IMR-90 (cell line): ENCODE measurements at regions of chr5 and their contacts with region 1.

Region 1: DNA sequence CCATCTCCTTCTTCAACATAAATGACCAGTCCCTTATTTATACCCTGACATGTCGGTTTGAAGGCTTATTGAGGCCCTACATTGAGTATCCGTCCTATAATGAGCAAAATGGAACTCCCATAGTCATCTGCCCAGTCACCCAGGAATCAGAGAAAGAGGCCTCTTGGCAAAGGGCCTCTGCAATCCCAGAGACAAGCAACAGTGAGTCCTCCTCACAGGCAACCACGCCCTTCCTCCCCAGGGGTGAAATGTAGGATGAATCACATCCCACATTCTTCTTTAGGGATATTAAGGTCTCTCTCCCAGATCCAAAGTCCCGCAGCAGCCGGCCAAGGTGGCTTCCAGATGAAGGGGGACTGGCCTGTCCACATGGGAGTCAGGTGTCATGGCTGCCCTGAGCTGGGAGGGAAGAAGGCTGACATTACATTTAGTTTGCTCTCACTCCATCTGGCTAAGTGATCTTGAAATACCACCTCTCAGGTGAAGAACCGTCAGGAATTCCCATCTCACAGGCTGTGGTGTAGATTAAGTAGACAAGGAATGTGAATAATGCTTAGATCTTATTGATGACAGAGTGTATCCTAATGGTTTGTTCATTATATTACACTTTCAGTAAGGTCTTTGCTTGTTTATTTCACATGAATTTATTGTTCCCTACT is 38.2 kb upstream of the BTNL3 start:
- DNase-seq: no peak
- ATAC-seq: no peak
- H3K4me3 ChIP-seq: no peak overlapping the region
- H3K27ac ChIP-seq: no peak overlapping the region
- H3K4me1 ChIP-seq: no peaks in the 10 kb centered on the region
- H3K27me3 ChIP-seq: no peaks in the 10 kb centered on the region
- CTCF ChIP-seq: no peak
- POLR2A ChIP-seq: no peak
- RAD21 ChIP-seq: no peak

Region 2: DNA sequence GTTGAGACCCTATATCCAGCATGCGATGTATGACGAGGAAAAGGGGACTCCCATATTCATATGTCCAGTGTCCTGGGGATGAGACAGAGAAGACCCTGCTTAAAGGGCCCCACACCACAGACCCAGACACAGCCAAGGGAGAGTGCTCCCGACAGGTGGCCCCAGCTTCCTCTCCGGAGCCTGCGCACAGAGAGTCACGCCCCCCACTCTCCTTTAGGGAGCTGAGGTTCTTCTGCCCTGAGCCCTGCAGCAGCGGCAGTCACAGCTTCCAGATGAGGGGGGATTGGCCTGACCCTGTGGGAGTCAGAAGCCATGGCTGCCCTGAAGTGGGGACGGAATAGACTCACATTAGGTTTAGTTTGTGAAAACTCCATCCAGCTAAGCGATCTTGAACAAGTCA is 55.4 kb after region 1 on chr5:
- CTCF ChIA-PET with region 1: no interaction called
- POLR2A ChIA-PET with region 1: no interaction called
- dilution Hi-C with region 1: no loop called
- in situ Hi-C with region 1: no loop called
- intact Hi-C with region 1: loop called (anchors 1 kb)
- DNase-seq: no peak
- ATAC-seq: no peak
- H3K4me3 ChIP-seq: no peak overlapping the region
- H3K27ac ChIP-seq: no peak overlapping the region
- H3K4me1 ChIP-seq: no peaks in the 10 kb centered on the region
- H3K27me3 ChIP-seq: no peaks in the 10 kb centered on the region
- CTCF ChIP-seq: no peak
- POLR2A ChIP-seq: no peak
- RAD21 ChIP-seq: no peak